HCT116 (cell line): ENCODE measurements at regions of chr13 and their contacts with region 1.

Region 1: DNA sequence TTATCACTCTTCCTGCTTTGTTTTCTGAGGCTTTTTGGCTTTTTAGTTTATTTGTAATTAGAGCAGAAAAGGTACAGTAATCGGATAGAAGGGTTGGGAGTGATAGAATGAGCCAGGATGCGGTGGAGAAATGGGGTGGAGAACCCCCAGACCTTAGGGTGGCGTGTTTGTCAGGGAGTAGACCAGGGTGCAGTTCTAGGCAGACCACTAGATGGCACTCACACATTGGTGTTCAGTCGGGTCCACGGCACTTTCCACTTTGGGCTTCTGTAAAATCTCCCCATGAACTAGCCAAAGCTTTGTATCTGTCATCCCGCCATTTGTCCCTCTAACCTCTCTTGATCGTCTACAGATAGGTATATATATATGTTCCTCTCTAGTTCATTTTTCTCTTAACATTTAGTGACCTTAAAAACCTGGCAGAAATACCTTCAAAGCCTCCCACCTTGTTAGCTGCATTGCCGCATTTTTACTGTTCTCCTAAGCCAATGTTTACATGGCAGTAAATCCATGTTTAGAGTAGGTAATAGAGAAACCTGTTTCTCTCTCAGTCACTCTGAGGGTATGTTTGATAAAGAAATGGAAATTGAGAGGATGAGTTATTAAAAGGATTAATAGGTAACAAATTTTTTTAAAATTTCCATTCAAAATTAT is 154.9 kb downstream of the TM9SF2 start:
- DNase-seq: peak; percentile 55
- ATAC-seq: peak; percentile 82
- H3K4me3 ChIP-seq: peak overlapping the region; percentile 1 to 43
- H3K27ac ChIP-seq: peak overlapping the region; percentile 63
- H3K4me1 ChIP-seq: peaks cover 11 to 23% of the 10 kb centered on the region in 2 experiments
- H3K27me3 ChIP-seq: no peaks in the 10 kb centered on the region
- CTCF ChIP-seq: peak; percentile 86 to 93 (median 90)
- POLR2A ChIP-seq: no peak
- RAD21 ChIP-seq: peak; percentile 87

Region 2: DNA sequence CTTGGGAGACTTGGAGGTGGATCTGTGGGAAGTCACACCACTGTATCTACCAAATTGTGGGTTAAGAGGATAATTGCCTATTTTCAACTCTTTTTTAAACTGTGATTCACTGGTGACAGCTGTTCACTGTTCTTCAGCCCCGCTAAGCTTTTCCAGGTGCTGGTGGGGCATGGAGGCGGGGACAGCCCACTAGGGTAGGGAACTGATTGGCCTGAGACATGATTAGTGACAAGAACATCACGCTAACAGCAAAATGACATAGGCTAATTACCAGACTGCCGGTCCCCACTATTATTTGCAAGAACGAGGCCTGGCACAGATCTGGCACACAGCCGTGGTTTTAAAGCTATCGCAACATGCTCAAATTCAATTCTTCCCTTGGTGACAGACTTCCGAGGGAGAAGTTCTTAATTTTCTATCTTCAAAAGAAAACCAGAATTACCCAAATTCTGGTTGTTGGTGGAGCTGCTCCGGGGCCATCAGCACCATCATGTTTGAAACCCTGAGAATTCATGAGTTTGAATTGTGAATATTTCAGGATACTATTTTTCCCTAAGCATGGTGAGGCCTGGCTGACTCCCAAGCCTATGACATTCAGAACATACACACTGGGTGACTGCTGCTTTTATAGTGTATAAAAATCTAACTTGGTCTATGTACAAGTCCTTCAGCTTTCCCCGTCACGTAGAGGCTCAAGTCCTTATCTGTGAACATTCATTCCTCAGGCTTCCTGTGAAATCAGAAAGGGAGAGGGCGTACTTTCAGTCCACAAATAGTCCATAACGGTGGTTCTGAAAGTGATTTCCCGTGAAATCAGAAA is 696.2 kb before region 1 on chr13:
- CTCF ChIA-PET with region 1: no interaction called
- POLR2A ChIA-PET with region 1: no interaction called
- RAD21 ChIA-PET with region 1: no interaction called
- intact Hi-C with region 1: no loop called
- DNase-seq: no peak
- ATAC-seq: no peak
- H3K4me3 ChIP-seq: no peak overlapping the region
- H3K27ac ChIP-seq: no peak overlapping the region
- H3K4me1 ChIP-seq: peaks cover 0 to 5% of the 10 kb centered on the region in 2 experiments; a peak in 1 of 4 replicates
- H3K27me3 ChIP-seq: no peaks in the 10 kb centered on the region
- CTCF ChIP-seq: no peak
- POLR2A ChIP-seq: no peak
- RAD21 ChIP-seq: no peak

Region 3: DNA sequence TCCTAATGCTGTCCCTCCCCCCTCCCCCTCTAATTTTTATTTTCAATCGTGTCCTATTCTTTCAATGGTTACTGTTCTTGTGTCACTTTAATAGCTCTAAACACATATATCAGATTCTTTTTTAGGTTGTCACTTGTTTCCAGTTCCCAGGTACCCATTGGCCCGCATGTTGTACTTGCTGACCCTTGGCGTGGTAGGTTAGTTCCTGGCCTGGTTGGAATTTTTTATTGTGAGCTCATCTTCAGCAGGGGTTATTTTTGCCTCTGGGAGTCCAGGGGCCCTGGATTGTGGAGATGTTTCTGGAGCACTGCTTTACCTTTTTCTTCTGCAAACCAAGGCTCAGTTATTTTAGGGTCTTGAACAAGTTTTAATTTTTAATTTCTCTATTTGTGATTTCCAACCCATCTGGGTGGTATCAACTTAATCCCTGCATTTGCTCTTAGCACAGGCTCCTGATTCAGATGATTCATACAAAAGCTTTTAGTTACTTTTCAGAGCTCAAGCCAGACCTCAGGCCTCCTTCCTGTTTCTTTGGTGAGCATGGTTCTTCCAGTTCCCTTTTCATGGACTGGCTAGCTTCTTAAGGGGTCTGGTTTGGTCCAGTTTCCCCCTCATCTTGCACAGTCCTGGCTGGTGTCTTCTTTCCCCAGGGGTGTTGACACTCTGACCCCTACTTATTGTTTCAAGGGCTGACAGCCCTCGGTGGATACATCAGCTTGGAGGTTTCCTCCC is 65.6 kb after region 1 on chr13:
- CTCF ChIA-PET with region 1: no interaction called
- POLR2A ChIA-PET with region 1: no interaction called
- RAD21 ChIA-PET with region 1: no interaction called
- intact Hi-C with region 1: no loop called
- DNase-seq: no peak
- ATAC-seq: no peak
- H3K4me3 ChIP-seq: no peak overlapping the region
- H3K27ac ChIP-seq: no peak overlapping the region
- H3K4me1 ChIP-seq: peaks cover 0 to 5% of the 10 kb centered on the region in 2 experiments; a peak in 1 of 4 replicates
- H3K27me3 ChIP-seq: no peaks in the 10 kb centered on the region
- CTCF ChIP-seq: no peak
- POLR2A ChIP-seq: no peak
- RAD21 ChIP-seq: no peak

Region 4: GRCh38 chr13:99916366-99917103 is 260.3 kb after region 1 on chr13:
- CTCF ChIA-PET with region 1: no interaction called
- POLR2A ChIA-PET with region 1: no interaction called
- RAD21 ChIA-PET with region 1: no interaction called
- intact Hi-C with region 1: loop called (anchors 5 kb)
- DNase-seq: peak; percentile 73
- ATAC-seq: peak; percentile 99
- H3K4me3 ChIP-seq: no peak overlapping the region
- H3K27ac ChIP-seq: no peak overlapping the region
- H3K4me1 ChIP-seq: no peaks in the 10 kb centered on the region
- H3K27me3 ChIP-seq: no peaks in the 10 kb centered on the region
- CTCF ChIP-seq: peak; percentile 99 to 100 (median 99)
- POLR2A ChIP-seq: no peak
- RAD21 ChIP-seq: peak; percentile 97

Region 5: DNA sequence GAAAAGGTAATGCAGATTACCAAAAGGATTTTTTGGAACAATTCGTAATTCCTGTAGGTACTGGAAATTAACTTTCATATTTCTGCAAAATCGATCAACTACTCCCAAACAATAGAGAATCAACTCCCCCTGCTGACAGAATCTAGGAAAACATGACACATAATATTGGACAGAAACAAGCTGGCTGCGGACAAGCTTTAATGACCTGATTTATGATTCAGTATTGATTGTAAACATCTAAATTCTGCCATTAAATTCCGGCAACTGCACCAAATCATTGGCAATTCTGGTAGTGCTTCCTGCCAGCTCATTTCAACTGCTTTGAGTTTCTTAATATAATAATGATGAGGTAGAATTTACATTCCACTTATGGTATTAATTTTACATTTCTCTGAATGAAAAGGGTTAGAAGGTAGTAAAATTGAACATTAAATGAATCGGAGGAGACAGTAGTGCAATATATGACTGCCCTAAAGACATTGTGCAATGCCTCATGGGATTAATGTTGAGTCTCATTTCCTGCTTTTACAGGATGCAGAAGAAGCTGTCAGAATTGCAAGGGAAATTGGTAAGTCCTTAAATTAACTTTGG is 579.2 kb after region 1 on chr13:
- CTCF ChIA-PET with region 1: interaction called, 42 read pairs
- POLR2A ChIA-PET with region 1: no interaction called
- RAD21 ChIA-PET with region 1: interaction called in 1 of 2 experiments, 3 read pairs
- intact Hi-C with region 1: loop called (anchors 1 kb)
- DNase-seq: peak; percentile 45
- ATAC-seq: peak; percentile 62; the same call in 1 of the 2 replicates
- H3K4me3 ChIP-seq: no peak overlapping the region
- H3K27ac ChIP-seq: no peak overlapping the region
- H3K4me1 ChIP-seq: peaks cover 18 to 20% of the 10 kb centered on the region in 2 experiments
- H3K27me3 ChIP-seq: no peaks in the 10 kb centered on the region
- CTCF ChIP-seq: peak; percentile 44 to 93 (median 71)
- POLR2A ChIP-seq: no peak
- RAD21 ChIP-seq: peak; percentile 89

Region 6: DNA sequence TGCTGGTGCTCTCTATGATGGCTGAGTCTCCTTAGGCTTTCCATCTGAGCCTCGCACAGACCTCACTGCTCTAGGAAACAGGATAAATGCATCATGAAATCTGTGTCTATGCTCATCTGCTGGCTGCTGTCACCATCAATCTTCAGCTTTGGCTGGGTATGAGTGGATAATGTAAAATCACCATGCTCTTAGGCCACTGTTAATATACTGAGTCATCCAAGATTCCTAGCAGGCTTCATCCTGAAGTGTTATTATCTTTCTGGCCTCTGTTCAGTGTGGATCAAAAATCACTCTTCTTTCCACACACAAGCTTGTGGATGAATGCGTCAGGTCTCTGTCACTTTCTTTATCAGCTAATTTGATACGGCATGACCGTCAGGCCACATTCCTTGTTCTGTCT is 1442.7 kb after region 1 on chr13:
- CTCF ChIA-PET with region 1: no interaction called
- POLR2A ChIA-PET with region 1: no interaction called
- RAD21 ChIA-PET with region 1: no interaction called
- intact Hi-C with region 1: loop called (anchors 2 kb)
- DNase-seq: no peak
- ATAC-seq: no peak
- H3K4me3 ChIP-seq: no peak overlapping the region
- H3K27ac ChIP-seq: no peak overlapping the region
- H3K4me1 ChIP-seq: no peaks in the 10 kb centered on the region
- H3K27me3 ChIP-seq: no peaks in the 10 kb centered on the region; the same call in 1 of the 2 replicates
- CTCF ChIP-seq: no peak
- POLR2A ChIP-seq: no peak
- RAD21 ChIP-seq: no peak